Activated naive CD4-positive, alpha-beta T cell treated with anti-CD3 and anti-CD28 coated beads, Interleukin-2, amount 10 ng/mL, durations not matched to agents 7 days and 5 days (primary cell): ENCODE measurements at regions of chr18 and their contacts with region 1.

Region 1: GRCh38 chr18:51051105-51051712 is 21.2 kb downstream of the SMAD4 start:
- DNase-seq: no peak
- H3K4me3 Mint-ChIP-seq: no peak overlapping the region
- H3K27ac Mint-ChIP-seq: peak overlapping the region; percentile 15
- H3K4me1 Mint-ChIP-seq: peaks cover 24% of the 10 kb centered on the region
- H3K27me3 Mint-ChIP-seq: no peaks in the 10 kb centered on the region

Region 2: DNA sequence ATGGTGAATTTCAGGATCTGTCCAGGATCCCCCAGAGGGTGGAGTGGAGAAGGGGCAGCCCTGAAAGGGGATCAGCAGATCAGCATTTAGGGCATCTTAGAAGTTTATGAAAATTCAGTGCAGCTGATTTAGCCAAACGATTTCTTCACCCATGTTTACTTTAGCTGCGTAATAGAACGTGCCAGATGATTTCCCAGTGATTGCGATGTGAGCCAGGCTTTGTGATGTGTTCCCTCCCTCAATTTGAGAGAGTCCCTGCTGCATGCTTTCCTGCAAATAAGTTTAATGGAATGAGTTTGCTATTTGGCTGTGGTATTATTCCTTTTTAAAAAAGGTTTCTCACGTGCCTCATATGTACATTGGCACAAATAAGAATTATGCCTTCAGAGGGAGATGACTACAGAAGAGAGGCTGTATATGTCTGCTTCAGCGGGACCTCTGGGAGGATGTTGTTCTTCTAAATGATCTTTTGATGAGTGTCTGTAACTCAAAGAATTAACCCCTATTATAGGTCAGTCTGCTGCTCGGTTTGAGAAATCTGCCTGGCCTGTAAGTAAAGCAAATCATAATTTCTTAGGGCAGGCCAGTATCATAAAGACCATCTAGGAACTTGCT is 343.2 kb before region 1 on chr18:
- CTCF ChIA-PET with region 1: no interaction called
- DNase-seq: no peak
- H3K4me3 Mint-ChIP-seq: no peak overlapping the region
- H3K27ac Mint-ChIP-seq: no peak overlapping the region
- H3K4me1 Mint-ChIP-seq: no peaks in the 10 kb centered on the region
- H3K27me3 Mint-ChIP-seq: peaks cover 13% of the 10 kb centered on the region

Region 3: GRCh38 chr18:50819728-50820378 is 231.4 kb before region 1 on chr18 and contains the start of gene MRO:
- CTCF ChIA-PET with region 1: interaction called, 23 read pairs
- DNase-seq: peak; percentile 83
- H3K4me3 Mint-ChIP-seq: no peak within 1 kb of the TSS
- H3K27ac Mint-ChIP-seq: no peak within 1 kb of the TSS
- H3K4me1 Mint-ChIP-seq: no peaks in the 10 kb centered on the region
- H3K27me3 Mint-ChIP-seq: peaks cover 17% of the 10 kb centered on the region

Region 4: DNA sequence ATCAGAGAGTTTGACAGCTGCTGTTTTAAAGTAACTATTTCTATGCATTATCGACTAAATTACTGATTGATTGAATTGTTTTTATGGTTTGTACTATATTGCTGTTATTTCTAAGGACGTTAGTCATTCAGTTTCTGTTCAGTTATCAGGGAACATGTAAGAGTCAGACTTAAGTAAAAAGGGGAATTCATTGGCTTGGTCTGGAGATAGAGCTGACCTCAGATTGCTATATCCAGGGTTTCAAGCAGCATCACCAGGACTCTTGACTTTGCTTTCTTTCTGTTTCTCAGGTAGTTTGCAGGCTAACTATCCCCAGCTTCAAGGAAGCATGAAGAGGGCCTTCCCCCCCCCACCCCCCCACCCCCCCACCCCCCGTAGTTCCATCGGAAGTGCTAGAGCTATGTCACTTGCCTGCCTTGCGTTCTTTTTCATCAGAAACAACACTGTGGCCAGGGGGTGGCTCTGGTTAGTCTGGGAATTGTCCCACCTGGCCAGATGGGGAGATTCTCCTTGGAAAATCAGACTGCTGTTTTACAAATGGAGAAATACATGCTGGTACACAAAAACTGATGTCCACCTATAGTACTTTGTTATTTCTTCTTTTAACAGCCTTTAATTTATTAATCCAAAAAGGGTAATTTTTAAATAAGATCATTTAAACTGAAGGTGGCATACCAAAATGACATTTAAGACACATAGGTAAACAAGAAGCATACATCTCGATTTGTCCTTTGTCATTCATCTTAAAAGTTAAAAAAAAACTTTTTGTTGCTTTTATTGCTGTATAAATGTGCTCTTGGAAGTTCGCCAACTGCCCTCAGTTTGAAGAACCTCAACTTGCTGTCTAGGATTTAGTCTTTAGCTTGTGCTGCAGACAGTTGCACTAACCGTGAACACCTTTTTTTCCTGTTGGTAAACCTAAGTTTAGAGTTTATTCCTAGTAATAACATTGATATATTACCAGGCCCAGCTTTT is 11.8 kb before region 1 on chr18:
- CTCF ChIA-PET with region 1: interaction called, 18 read pairs
- DNase-seq: no peak
- H3K4me3 Mint-ChIP-seq: no peak overlapping the region
- H3K27ac Mint-ChIP-seq: no peak overlapping the region
- H3K4me1 Mint-ChIP-seq: peaks cover 46% of the 10 kb centered on the region
- H3K27me3 Mint-ChIP-seq: no peaks in the 10 kb centered on the region